ENCODE measurements at regions of chr4 and their contacts with region 1.

Region 1: GRCh38 chr4:169619959-169620879 is at the start of gene CLCN3:
- DNase-seq: peak; percentile 93 to 100 (median 97)

Region 2: GRCh38 chr4:169659716-169660670 is 39.8 kb after region 1 on chr4:
- intact Hi-C with region 1: loop called (anchors 2 kb)
- DNase-seq: peak in 6 of 10 donors; percentile 40 to 91 (median 44)

Region 3: GRCh38 chr4:169791527-169792156 is 171.4 kb after region 1 on chr4:
- intact Hi-C with region 1: loop called (anchors 5 kb)
- DNase-seq: peak; percentile 28 to 95 (median 66)